GM13977 (cell line): ENCODE measurements at regions of chr16 and their contacts with region 1.

Region 1: DNA sequence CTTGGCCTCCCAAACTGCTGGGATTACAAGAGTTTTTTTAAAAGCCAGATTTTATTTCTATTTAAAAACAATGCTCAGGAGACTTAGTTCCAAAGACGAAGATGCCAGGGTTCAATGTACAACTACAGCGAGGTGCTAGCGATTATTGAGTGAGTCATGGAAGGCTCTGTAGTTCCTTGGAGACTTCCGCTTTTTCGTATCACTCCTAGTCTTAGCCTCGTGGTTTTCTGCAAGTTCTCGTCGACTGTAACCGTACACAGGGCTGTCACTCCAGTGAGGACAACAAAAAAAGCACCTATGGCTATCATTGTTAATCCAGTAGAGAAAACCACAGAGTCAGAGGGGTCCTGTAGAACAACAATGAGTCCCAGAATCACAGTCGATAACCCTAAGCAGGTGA is 22.7 kb upstream of the ZC3H7A start:
- DNase-seq: no peak
- CTCF ChIP-seq: no peak

Region 2: GRCh38 chr16:11535471-11535870 is 284.3 kb before region 1 on chr16:
- in situ Hi-C with region 1: loop called (anchors 10 kb)
- DNase-seq: no peak
- CTCF ChIP-seq: no peak

Region 3: DNA sequence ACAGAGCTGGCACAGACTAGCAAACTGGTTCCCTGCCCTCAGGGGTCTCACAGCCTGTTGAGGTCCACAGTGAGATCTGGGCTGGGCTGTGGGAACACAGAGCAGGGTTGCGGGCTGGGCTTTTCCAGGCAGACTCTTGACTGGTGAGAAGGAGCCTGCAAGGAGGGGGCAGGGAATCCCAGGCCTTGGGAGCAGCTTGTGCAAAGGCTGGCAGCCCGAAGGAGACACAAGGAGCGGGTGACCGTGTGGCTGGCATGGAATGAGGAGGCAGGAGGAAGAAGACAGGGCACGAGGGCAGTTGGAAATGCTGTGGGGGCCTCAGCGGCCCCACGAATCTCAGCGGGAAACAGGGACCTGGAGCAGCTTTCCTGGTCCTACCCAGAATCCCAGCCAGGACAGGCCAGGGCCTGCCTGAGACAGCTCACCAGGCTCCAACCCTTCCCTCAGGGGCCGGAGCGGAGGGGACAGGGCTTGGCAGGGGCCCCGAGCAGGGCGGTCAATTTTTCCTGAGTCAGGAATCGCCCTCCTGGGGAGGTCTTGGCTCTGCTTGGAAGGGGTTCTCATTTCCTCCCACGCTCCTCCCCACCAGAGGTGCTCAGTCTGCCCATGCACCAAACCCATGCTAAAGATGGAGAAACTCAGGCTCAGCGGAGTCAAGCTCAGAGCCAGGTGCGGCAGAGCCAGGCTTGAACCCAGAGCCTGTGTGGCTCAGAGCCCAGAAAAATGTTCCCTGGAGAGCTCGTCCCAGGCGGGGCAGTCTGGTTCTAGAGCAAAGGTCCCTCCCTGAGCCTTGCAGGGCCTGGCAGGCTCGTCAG is 160.7 kb before region 1 on chr16:
- in situ Hi-C with region 1: loop called (anchors 10 kb)
- DNase-seq: no peak
- CTCF ChIP-seq: no peak